Naive thymus-derived CD4-positive, alpha-beta T cell (primary cell): ENCODE measurements at regions of chr5 and their contacts with region 1.

Region 1: DNA sequence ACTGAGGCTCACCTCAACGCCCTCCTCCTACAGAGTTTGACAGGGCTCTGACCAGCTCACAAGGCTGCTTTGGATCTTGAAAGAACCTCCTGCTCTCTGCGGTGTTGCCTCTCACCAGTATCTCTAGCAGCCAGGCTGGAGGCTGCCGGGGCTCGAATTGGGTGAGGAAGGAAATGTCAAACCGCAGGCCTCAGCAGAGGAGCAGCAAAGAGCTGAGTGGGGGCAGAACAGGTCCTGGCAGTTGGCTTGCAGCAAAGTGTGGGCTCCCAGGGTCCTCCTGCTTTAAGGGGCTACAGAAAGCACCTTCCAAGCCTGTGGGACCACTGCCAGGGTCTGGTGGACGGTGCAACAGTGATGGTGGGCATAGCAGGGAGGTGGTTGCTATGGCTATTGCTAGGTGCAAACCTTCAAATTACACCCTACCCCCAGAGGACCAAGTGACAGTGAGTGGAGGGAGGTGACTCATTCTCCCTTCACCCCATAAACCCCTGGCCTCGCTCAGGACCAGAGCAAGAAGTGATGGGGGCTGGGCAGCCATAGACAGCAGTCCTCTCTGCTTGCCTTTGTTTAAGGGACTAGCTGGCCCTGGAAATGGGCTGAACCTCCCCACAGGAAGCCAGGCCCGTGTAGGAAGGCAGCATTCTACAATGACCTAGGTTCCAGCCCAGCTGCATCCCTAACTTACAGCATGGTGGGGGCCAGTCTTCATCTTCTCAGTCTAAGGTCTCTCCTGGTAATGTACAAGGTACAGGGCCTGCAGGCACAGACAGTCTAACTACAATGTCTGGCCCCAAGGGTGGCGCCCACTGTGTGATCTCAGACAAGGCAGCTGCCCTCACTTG is 18.7 kb downstream of the LCP2 start:
- DNase-seq: peak; percentile 66 to 93 (median 90)
- ATAC-seq: peak; percentile 84
- H3K4me3 ChIP-seq: peak overlapping the region; percentile 33
- H3K4me3 Mint-ChIP-seq: peak overlapping the region; percentile 68 to 100 (median 86)
- H3K27ac ChIP-seq: peak overlapping the region; percentile 75
- H3K27ac Mint-ChIP-seq: peak overlapping the region; percentile 93 to 98 (median 95)
- H3K4me1 ChIP-seq: peaks cover 92 to 94% of the 10 kb centered on the region in 2 donors
- H3K4me1 Mint-ChIP-seq: peaks cover 72 to 100% (median 96%) of the 10 kb centered on the region in 7 donors
- H3K27me3 ChIP-seq: no peaks in the 10 kb centered on the region
- H3K27me3 Mint-ChIP-seq: peaks cover 0 to 2% (median 0%) of the 10 kb centered on the region in 5 donors

Region 2: DNA sequence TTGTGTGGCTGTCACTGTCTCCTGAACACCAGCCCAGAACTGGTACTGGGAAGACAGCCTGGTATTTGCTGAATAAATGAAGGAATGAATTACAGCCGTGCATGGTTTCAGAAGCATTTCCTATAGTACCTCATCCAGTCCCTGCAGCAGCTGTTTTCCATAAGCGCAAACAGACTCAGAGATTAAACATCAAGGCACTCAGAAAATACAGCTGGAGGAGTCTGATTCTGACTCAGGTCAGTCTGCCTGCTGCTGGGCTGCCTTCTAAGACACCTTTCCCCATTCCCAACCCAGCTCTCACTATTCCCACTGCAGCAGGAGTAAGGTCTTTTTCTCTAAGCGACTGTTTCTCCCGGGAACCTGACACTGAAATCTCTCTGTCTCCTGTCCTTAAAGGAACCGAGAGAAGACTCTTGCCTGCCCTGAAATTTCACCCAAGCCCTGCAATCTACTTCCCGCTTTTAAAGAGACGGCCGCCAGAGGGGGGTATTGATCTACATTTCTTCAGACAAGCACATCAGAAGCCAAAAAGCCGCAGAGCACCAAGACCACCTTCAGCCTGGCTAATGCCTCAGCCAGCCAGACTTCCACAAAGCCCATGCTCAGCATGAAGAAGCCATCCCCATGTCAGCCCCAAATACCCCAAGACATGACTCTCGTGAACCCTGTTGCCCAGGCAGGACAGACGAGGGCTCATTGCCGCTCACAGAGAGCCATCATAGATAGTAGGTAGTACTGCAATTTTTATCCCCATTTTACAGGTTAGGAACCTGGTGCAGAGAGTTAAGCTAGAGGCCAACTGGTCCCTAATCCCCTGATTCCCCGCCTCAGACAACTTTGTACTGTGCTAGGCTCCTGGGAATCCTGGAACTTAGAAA is 178.5 kb before region 1 on chr5:
- CTCF ChIA-PET with region 1: no interaction called
- POLR2A ChIA-PET with region 1: no interaction called
- intact Hi-C with region 1: loop called in 1 of 2 experiments (anchors 1 kb)
- DNase-seq: peak; percentile 38 to 67 (median 64)
- ATAC-seq: peak; percentile 65
- H3K4me3 ChIP-seq: no peak overlapping the region
- H3K4me3 Mint-ChIP-seq: no peak overlapping the region
- H3K27ac ChIP-seq: no peak overlapping the region
- H3K27ac Mint-ChIP-seq: peak overlapping the region in 2 of 9 donors; percentile 6 to 43
- H3K4me1 ChIP-seq: no peaks in the 10 kb centered on the region
- H3K4me1 Mint-ChIP-seq: peaks cover 0 to 10% (median 0%) of the 10 kb centered on the region in 7 donors
- H3K27me3 ChIP-seq: no peaks in the 10 kb centered on the region
- H3K27me3 Mint-ChIP-seq: peaks cover 3 to 16% (median 6%) of the 10 kb centered on the region in 5 donors

Region 3: DNA sequence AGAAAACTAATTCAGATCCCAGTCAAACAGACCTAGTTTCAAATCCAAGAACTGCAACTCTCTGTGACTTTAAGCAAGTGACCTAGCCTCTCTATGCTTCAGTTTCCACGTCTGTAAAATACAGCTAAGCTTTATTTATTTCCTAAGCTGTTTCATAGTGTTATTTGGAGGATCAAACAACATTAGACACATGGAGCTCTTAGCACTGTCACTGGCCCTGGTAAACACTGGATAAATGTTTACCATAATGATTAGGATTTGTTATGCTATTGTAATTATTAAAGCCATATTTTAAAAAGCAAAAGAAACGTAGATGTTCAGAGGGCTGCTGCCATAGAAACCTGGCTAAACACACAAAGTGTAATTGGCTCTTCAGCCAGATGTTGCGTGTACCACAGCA is 72.6 kb before region 1 on chr5:
- CTCF ChIA-PET with region 1: no interaction called
- POLR2A ChIA-PET with region 1: no interaction called
- intact Hi-C with region 1: no loop called
- DNase-seq: no peak
- ATAC-seq: no peak
- H3K4me3 ChIP-seq: no peak overlapping the region
- H3K4me3 Mint-ChIP-seq: no peak overlapping the region
- H3K27ac ChIP-seq: no peak overlapping the region
- H3K27ac Mint-ChIP-seq: no peak overlapping the region
- H3K4me1 ChIP-seq: no peaks in the 10 kb centered on the region
- H3K4me1 Mint-ChIP-seq: no peaks in the 10 kb centered on the region
- H3K27me3 ChIP-seq: no peaks in the 10 kb centered on the region
- H3K27me3 Mint-ChIP-seq: peaks cover 0 to 53% (median 16%) of the 10 kb centered on the region in 5 donors

Region 4: DNA sequence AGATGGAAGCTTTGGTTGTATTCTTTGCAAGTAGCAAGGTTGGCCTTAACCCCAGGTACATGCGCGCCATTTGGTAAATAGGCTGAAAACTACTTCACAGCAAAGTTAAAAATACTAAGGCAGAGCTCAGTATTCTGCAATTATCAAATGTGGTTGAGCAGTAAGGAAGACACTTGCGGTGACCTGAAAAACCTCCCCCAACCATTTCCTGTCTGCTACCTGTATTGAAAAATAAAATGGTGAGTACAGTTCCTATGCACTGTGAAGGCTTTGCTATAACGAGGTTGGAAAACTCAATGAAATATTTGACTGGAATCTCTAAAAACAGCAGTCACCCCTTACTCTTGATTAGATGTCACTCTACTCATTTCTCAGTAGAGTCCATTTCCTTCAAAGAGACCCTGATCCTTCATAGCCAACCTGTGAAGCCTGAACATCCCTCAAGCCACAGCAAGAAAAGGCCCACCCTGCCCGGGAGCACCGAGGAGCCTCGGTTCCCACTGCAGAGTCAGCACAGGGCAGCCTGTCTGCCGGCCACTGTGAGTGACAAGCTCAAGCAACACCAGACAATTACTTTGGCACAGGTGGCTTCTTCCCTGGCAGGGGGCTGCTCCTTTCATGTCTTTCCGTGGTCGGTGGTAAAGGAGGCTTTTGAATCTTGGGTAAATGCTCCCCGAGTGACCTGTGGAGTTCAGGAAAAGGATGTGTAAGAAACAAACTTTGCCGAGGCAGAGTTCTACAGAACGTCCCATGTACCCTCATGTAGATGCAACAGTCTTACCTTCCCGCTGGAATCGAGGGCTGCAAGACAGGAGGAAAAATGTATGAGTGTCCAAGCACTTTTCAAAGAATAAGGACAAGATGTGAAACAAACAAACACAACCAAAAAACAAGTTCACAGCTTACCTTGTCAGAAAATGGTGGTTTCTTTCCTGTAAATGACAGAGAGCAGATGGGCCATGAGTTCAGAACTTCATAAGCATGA is 16.5 kb before region 1 on chr5:
- CTCF ChIA-PET with region 1: interaction called, 70 read pairs
- POLR2A ChIA-PET with region 1: interaction called, 54 read pairs
- intact Hi-C with region 1: loop called (anchors 1 to 2 kb)
- DNase-seq: peak in 7 of 9 donors; percentile 78 to 89 (median 86)
- ATAC-seq: peak; percentile 90
- H3K4me3 ChIP-seq: peak overlapping the region; percentile 21
- H3K4me3 Mint-ChIP-seq: peak overlapping the region; percentile 64 to 87 (median 76)
- H3K27ac ChIP-seq: peak overlapping the region; percentile 74
- H3K27ac Mint-ChIP-seq: peak overlapping the region; percentile 89 to 99 (median 97)
- H3K4me1 ChIP-seq: peaks cover 49 to 72% of the 10 kb centered on the region in 2 donors
- H3K4me1 Mint-ChIP-seq: peaks cover 52 to 99% (median 96%) of the 10 kb centered on the region in 7 donors
- H3K27me3 ChIP-seq: no peaks in the 10 kb centered on the region
- H3K27me3 Mint-ChIP-seq: no peaks in the 10 kb centered on the region

Region 5: DNA sequence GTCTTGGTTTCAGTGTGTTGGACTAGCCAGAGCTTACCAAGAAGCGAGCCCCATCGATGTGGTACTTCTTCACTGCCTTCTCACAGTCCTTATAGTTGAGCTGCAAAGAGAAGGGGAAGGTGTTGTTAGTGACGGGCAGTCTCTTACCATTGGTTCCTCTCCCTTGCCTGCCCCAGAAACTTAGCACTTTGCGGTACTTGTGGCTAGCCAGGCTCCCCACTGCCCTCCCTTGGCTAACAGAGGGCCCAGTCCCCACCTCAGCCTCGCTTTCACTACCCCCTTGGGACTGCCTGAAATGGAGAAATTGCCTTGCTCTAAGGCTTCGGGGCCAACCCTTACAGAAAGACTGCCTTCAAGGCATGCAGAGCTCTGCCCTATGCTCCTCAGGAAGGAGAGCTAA is 14.4 kb after region 1 on chr5:
- CTCF ChIA-PET with region 1: interaction called, 430 read pairs
- POLR2A ChIA-PET with region 1: interaction called, 1,119 read pairs
- intact Hi-C with region 1: loop called (anchors 1 kb)
- DNase-seq: peak in 2 of 9 donors; percentile 18 to 60
- ATAC-seq: peak; percentile 75
- H3K4me3 ChIP-seq: peak overlapping the region; percentile 92
- H3K4me3 Mint-ChIP-seq: peak overlapping the region; percentile 92 to 100 (median 98)
- H3K27ac ChIP-seq: peak overlapping the region; percentile 88
- H3K27ac Mint-ChIP-seq: peak overlapping the region; percentile 67 to 98 (median 95)
- H3K4me1 ChIP-seq: peaks cover 58 to 66% of the 10 kb centered on the region in 2 donors
- H3K4me1 Mint-ChIP-seq: peaks cover 62 to 75% (median 71%) of the 10 kb centered on the region in 7 donors
- H3K27me3 ChIP-seq: no peaks in the 10 kb centered on the region
- H3K27me3 Mint-ChIP-seq: no peaks in the 10 kb centered on the region

Region 6: DNA sequence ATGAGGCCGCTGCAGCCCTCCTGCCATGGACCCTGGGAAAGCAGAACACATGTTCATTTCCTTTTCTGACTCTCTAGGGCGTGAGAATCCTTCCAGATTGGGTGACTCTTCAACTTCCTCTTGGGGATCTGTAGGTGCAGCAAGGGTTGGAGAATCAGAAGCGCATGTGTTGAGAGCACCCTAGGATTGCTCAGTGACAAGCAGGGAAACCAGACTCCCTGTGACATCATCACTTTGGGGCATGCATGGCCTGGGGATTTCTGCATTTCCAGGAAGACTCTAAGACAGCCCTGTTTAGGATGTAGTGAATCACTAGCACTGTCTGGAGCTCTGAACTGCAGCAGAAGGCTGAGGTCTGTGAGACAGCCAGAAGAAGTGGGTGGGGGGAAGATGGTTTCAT is 33.8 kb after region 1 on chr5:
- CTCF ChIA-PET with region 1: interaction called, 5 read pairs
- POLR2A ChIA-PET with region 1: interaction called, 1,119 read pairs
- intact Hi-C with region 1: loop called in 1 of 2 experiments (anchors 1 kb)
- DNase-seq: peak in 4 of 9 donors; percentile 27 to 85 (median 48)
- ATAC-seq: peak; percentile 87
- H3K4me3 ChIP-seq: peak overlapping the region; percentile 39
- H3K4me3 Mint-ChIP-seq: peak overlapping the region; percentile 66 to 83 (median 75)
- H3K27ac ChIP-seq: peak overlapping the region; percentile 69
- H3K27ac Mint-ChIP-seq: peak overlapping the region; percentile 58 to 97 (median 95)
- H3K4me1 ChIP-seq: peaks cover 29 to 50% of the 10 kb centered on the region in 2 donors
- H3K4me1 Mint-ChIP-seq: peaks cover 38 to 85% (median 70%) of the 10 kb centered on the region in 7 donors
- H3K27me3 ChIP-seq: no peaks in the 10 kb centered on the region
- H3K27me3 Mint-ChIP-seq: no peaks in the 10 kb centered on the region

Region 7: DNA sequence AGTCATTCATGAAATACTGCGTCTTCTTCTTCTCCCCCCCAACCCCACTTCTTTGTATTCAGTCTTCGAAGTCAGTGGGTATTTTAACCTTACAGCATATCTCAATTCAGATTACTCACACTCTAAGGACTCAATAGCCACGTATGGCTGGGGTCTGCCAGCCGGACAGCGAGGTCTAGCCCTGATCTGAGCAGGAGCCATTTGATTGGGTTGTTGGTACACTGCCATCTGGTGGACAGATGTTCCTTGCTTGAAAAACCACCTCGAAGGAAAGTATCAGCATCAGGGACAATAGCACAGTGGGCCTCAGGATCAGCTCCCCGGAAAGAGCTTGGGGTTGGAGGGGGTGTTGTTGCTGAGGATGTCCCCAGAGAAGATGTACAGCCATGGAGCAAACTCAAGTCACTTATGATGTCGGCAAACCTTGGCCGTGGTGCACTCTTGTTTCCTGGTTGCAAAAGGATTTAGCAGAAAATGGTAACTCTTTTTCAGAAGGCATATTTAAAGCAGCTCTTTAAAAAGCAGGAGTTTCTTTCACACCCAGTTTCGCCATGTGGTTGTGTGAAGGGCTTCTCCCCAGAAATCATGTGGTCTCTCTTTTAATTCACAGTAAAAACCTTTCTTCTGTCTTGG is 142.1 kb after region 1 on chr5:
- CTCF ChIA-PET with region 1: interaction called, 4 read pairs
- POLR2A ChIA-PET with region 1: no interaction called
- intact Hi-C with region 1: loop called (anchors 1 kb)
- DNase-seq: peak; percentile 18 to 66 (median 48)
- ATAC-seq: peak; percentile 80
- H3K4me3 ChIP-seq: no peak overlapping the region
- H3K4me3 Mint-ChIP-seq: no peak overlapping the region
- H3K27ac ChIP-seq: no peak overlapping the region
- H3K27ac Mint-ChIP-seq: peak overlapping the region in 1 of 9 donors; percentile 1
- H3K4me1 ChIP-seq: peaks cover 10 to 19% of the 10 kb centered on the region in 2 donors
- H3K4me1 Mint-ChIP-seq: peaks cover 3 to 34% (median 30%) of the 10 kb centered on the region in 7 donors
- H3K27me3 ChIP-seq: no peaks in the 10 kb centered on the region
- H3K27me3 Mint-ChIP-seq: peaks cover 0 to 35% (median 0%) of the 10 kb centered on the region in 5 donors

Region 8: DNA sequence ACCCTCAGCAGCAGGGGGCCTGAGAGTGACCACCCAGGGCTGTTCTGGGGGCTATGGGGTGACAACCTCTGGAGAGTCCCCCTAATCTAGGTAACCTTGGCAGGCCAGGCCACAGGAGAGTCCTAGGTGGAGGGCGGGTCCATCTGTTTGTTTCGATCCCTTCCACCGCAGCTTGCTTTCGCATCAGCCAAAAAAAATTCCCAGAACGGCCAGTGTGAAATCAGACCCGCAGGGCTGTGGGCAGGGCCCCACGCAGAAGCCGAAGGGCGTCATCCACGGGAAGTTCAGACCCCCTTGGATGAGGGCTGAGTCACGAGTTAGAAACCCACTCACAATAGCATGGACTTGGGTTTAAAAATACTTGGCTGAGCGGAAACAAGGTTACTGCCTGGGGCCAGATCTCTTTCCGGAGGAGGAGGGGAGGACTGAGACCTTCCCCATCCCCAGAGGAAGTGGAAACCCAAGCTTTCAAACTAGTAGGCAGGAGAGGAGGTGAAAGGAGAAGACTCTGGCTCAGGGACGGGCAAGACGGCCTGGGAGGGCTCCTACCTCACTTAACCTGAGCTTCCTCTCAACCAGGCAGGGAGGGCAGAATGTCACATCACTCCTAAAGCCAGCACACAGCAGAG is 1900.6 kb after region 1 on chr5:
- CTCF ChIA-PET with region 1: no interaction called
- POLR2A ChIA-PET with region 1: interaction called, 3 read pairs
- intact Hi-C with region 1: loop called in 1 of 2 experiments (anchors 10 kb)
- DNase-seq: peak in 8 of 9 donors; percentile 40 to 68 (median 50)
- ATAC-seq: peak; percentile 8
- H3K4me3 ChIP-seq: peak overlapping the region; percentile 76
- H3K4me3 Mint-ChIP-seq: peak overlapping the region; percentile 78 to 99 (median 90)
- H3K27ac ChIP-seq: peak overlapping the region; percentile 92
- H3K27ac Mint-ChIP-seq: peak overlapping the region; percentile 94 to 100 (median 98)
- H3K4me1 ChIP-seq: peaks cover 86 to 87% of the 10 kb centered on the region in 2 donors
- H3K4me1 Mint-ChIP-seq: peaks cover 48 to 95% (median 84%) of the 10 kb centered on the region in 7 donors
- H3K27me3 ChIP-seq: no peaks in the 10 kb centered on the region
- H3K27me3 Mint-ChIP-seq: no peaks in the 10 kb centered on the region